Activated naive CD4-positive, alpha-beta T cell treated with anti-CD3 and anti-CD28 coated beads for 36 hours (primary cell): ENCODE measurements at regions of chr3 and their contacts with region 1.

Region 1: DNA sequence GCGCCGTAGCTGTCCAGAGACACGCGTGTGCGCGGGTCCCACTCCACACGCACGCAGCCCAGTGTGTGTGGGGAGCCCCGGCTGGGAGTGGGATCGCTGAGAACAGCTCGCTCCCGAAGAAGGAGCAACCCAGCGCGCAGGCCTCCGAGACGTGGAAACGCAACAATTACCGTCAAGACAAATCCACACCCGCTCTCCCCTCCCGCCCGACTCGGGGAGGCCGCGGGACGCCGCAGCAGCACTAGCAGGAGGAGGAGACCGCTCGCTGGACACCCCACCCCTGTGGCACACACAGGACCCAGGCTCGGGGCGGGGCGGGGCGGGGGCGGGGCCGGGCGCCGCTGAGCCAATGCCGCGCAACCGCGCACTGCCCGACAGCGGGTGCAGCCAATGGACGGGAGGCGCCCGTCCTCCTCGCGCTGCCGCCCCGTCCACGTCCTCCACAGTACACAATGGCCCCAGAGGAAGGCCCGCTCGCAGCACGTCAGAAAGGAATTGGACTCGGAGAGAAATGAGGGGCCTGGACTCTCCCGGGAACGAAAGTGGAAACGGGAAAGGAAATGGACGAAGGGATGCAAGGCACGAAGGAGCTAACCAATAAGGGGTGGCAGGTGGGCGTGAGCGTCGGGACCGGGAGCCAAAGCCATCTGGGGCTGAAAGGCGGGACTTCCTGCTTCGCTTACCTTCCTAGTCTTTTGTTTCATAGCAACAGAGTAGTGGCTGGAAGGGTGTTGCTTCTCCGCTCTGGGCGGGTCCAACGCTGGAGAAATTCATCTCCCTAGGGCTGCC is at the start of gene CBLB:
- DNase-seq: peak; percentile 90
- H3K4me3 Mint-ChIP-seq: peak within 1 kb of the TSS; percentile 94
- H3K27ac Mint-ChIP-seq: peak within 1 kb of the TSS; percentile 93
- H3K4me1 Mint-ChIP-seq: peaks cover 29% of the 10 kb centered on the region
- H3K27me3 Mint-ChIP-seq: no peaks in the 10 kb centered on the region
- total RNA-seq, gene CBLB: 72.8 to 78.9 TPM

Region 2: DNA sequence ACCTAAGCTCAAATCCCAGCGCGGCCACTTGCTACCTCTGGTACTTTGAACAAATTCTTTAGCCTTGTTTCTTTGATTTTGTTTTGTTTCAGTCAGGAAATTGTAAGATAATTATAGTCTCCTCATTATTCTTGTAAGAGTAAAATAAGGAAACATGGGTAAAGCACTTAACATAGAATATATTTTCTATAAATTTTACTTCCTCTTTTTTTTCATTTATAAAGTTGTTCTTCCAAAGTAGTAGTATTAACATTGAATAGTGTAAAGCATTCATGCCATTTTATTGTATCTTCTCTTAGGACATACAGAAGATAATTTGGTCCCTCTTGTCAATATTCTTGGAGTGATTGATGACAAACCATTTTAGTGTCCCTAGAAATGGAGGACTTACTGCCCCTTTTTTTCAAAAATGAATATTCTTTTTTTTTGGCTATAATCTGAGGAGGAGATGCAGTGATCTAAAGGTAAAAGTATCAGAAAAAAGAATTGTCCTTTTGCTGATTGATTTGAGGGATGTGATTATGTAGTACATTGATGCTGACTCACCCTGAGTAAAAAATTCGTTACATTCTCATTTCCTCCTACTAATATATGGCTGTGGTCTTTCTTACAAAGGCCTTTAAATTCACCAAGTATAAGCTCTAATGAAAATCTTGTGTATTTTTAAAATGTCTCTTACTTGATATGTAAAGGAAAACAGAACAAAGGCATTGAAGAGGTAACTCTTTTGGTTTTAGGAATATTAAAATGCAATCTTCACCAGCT is 451.2 kb before region 1 on chr3:
- CTCF ChIA-PET with region 1: no interaction called
- intact Hi-C with region 1: no loop called
- DNase-seq: no peak
- H3K4me3 Mint-ChIP-seq: no peak overlapping the region
- H3K27ac Mint-ChIP-seq: no peak overlapping the region
- H3K4me1 Mint-ChIP-seq: no peaks in the 10 kb centered on the region
- H3K27me3 Mint-ChIP-seq: no peaks in the 10 kb centered on the region

Region 3: DNA sequence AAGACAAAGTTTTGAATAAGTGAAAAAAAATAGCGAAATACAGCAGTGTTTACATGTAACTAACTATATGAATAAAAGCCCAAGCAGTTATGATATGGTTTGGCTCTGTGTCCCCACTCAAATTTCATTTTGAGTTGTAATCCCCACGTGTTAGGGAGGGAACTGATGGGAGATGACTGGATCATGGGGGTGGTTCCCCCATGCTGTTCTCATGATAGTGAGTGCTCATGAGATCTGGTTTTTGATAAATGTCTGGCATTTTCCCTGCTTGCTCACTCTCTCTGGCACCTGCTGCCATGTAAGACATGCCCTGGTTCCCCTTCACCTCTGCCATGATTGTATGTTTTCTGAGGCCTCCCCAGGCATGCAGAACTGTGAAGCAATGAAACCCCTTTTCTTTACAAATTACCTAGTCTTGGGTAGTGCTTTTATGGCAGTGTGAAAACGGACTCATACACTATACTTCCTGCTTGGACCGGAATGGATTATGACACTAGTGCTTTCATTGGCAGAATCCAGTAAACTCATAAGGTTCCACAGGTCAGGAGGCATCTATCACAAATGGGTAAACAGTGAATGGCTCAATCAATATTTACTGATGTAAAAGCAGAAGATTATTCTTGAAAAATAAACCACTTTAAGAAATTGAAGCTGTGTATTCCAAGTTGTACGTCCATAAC is 192.2 kb before region 1 on chr3:
- CTCF ChIA-PET with region 1: no interaction called
- intact Hi-C with region 1: loop called (anchors 1 kb)
- DNase-seq: peak; percentile 77
- H3K4me3 Mint-ChIP-seq: no peak overlapping the region
- H3K27ac Mint-ChIP-seq: peak overlapping the region; percentile 87
- H3K4me1 Mint-ChIP-seq: peaks cover 18% of the 10 kb centered on the region
- H3K27me3 Mint-ChIP-seq: no peaks in the 10 kb centered on the region

Region 4: GRCh38 chr3:105700575-105700974 is 168.4 kb before region 1 on chr3:
- CTCF ChIA-PET with region 1: no interaction called
- intact Hi-C with region 1: loop called (anchors 1 kb)
- DNase-seq: peak; percentile 43
- H3K4me3 Mint-ChIP-seq: no peak overlapping the region
- H3K27ac Mint-ChIP-seq: peak overlapping the region; percentile 47
- H3K4me1 Mint-ChIP-seq: peaks cover 26% of the 10 kb centered on the region
- H3K27me3 Mint-ChIP-seq: no peaks in the 10 kb centered on the region

Region 5: GRCh38 chr3:105752744-105753415 is 116.1 kb before region 1 on chr3:
- CTCF ChIA-PET with region 1: no interaction called
- intact Hi-C with region 1: loop called (anchors 1 kb)
- DNase-seq: peak; percentile 46
- H3K4me3 Mint-ChIP-seq: peak overlapping the region; percentile 42
- H3K27ac Mint-ChIP-seq: peak overlapping the region; percentile 92
- H3K4me1 Mint-ChIP-seq: peaks cover 77% of the 10 kb centered on the region
- H3K27me3 Mint-ChIP-seq: no peaks in the 10 kb centered on the region

Region 6: DNA sequence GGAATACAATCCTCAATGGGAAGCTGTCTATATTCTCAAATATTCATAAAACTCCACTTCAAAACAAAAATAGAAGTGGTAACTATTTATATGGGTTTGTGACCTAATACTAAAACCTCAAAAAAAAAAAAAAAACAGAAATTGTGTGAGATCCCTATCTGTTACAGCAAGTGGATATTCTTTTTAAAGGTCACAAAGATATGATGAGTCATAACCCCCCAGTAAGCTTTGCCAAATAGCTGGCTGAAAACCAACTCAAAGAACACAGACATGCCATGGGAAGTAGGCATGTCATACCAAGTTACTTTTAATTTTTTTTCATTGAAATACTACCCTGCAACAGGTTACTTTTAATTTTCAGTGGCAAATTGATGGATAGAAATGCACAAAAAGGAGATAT is 62.6 kb before region 1 on chr3:
- CTCF ChIA-PET with region 1: no interaction called
- intact Hi-C with region 1: loop called (anchors 2 kb)
- DNase-seq: no peak
- H3K4me3 Mint-ChIP-seq: no peak overlapping the region
- H3K27ac Mint-ChIP-seq: no peak overlapping the region
- H3K4me1 Mint-ChIP-seq: peaks cover 62% of the 10 kb centered on the region
- H3K27me3 Mint-ChIP-seq: no peaks in the 10 kb centered on the region

Region 7: DNA sequence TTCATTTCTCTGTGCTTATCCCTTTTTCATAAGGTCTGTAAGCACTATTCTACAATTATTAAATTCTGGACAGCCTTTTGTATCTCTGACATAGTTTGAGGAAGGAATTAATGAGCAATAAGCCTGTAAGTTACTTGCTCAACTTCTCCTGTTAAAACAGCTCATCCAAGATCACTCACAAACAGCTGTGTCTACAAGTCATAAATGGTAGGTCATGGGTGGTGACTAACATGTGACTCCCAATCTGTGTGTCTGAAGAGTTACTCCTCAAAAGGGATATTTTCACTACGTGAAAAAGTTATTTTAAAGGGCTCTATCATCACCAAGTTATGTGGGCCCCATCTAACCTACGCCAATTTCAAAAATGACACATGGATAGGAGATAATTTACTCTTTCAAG is 145.0 kb after region 1 on chr3:
- CTCF ChIA-PET with region 1: no interaction called
- intact Hi-C with region 1: loop called (anchors 1 kb)
- DNase-seq: no peak
- H3K4me3 Mint-ChIP-seq: no peak overlapping the region
- H3K27ac Mint-ChIP-seq: peak overlapping the region; percentile 37
- H3K4me1 Mint-ChIP-seq: peaks cover 49% of the 10 kb centered on the region
- H3K27me3 Mint-ChIP-seq: no peaks in the 10 kb centered on the region

Region 8: DNA sequence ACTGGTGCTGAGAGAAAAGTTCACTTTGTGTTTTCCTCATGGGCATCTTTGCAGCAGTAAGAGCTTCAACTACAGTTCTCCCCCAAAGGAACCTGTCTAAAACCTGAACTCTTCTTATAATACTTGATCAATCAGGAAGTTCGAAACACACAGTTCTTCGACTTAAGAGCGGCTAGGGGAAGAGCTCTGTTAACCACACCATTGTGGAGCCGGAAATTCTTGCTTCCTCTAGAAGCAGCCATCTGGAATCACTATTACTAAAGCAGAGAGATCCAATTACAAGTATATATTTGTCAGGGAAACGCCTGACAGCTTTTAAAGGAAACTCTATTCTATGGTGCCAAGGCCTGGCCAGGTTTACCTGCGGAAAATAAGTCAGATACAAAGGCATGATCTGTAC is 337.2 kb after region 1 on chr3:
- CTCF ChIA-PET with region 1: no interaction called
- intact Hi-C with region 1: loop called (anchors 1 kb)
- DNase-seq: peak; percentile 47
- H3K4me3 Mint-ChIP-seq: peak overlapping the region; percentile 55
- H3K27ac Mint-ChIP-seq: peak overlapping the region; percentile 98
- H3K4me1 Mint-ChIP-seq: peaks cover 55% of the 10 kb centered on the region
- H3K27me3 Mint-ChIP-seq: no peaks in the 10 kb centered on the region